Activated CD4-positive, alpha-beta memory T cell treated with anti-CD3 and anti-CD28 coated beads for 36 hours (primary cell): ENCODE measurements at regions of chr10 and their contacts with region 1.

Region 1: GRCh38 chr10:93554760-93555432 is 11.6 kb upstream of the FFAR4 start:
- DNase-seq: peak; percentile 66
- H3K4me3 Mint-ChIP-seq: no peak overlapping the region
- H3K27ac Mint-ChIP-seq: no peak overlapping the region
- H3K4me1 Mint-ChIP-seq: no peaks in the 10 kb centered on the region
- H3K27me3 Mint-ChIP-seq: peaks cover 2% of the 10 kb centered on the region

Region 2: DNA sequence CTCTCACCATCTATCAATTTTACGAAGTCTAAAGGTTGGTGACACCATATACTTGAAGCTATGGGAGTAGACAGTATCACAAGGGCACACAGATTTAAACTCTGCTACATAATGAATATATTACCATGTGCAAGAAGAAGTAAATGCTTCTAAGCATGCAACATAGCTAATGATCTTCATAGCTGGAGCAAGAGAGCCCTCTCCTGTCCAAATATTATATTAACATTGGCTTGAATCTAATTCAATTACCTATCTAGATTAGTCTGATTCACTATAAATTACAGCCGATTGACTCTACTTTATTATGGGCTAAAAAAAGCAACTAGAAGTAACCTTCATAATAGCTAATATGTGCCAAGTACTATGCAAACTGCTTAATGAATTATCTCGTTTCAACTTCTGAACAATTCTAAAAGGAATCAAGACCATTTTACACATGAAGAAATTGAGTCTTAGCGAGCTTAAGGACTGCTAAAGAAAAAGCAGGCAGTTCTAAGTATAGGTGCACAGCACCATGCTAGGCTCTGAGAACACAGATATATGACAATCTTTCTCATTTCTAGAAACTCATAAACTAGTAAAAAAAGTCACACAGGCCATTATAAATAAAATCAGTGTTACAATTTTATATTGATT is 125.6 kb after region 1 on chr10:
- CTCF ChIA-PET with region 1: interaction called, 6 read pairs
- POLR2A ChIA-PET with region 1: no interaction called
- intact Hi-C with region 1: loop called (anchors 5 kb)
- DNase-seq: no peak
- H3K4me3 Mint-ChIP-seq: no peak overlapping the region
- H3K27ac Mint-ChIP-seq: no peak overlapping the region
- H3K4me1 Mint-ChIP-seq: peaks cover 2% of the 10 kb centered on the region
- H3K27me3 Mint-ChIP-seq: no peaks in the 10 kb centered on the region

Region 3: GRCh38 chr10:93816123-93816747 is 261.3 kb after region 1 on chr10:
- CTCF ChIA-PET with region 1: interaction called, 3 read pairs
- POLR2A ChIA-PET with region 1: no interaction called
- intact Hi-C with region 1: loop called (anchors 1 kb)
- DNase-seq: peak; percentile 57
- H3K4me3 Mint-ChIP-seq: no peak overlapping the region
- H3K27ac Mint-ChIP-seq: no peak overlapping the region
- H3K4me1 Mint-ChIP-seq: no peaks in the 10 kb centered on the region
- H3K27me3 Mint-ChIP-seq: peaks cover 36% of the 10 kb centered on the region

Region 4: GRCh38 chr10:93859049-93859655 is 304.3 kb after region 1 on chr10:
- CTCF ChIA-PET with region 1: interaction called, 17 read pairs
- POLR2A ChIA-PET with region 1: no interaction called
- intact Hi-C with region 1: loop called (anchors 2 kb)
- DNase-seq: no peak
- H3K4me3 Mint-ChIP-seq: no peak overlapping the region
- H3K27ac Mint-ChIP-seq: no peak overlapping the region
- H3K4me1 Mint-ChIP-seq: no peaks in the 10 kb centered on the region
- H3K27me3 Mint-ChIP-seq: no peaks in the 10 kb centered on the region

Region 5: DNA sequence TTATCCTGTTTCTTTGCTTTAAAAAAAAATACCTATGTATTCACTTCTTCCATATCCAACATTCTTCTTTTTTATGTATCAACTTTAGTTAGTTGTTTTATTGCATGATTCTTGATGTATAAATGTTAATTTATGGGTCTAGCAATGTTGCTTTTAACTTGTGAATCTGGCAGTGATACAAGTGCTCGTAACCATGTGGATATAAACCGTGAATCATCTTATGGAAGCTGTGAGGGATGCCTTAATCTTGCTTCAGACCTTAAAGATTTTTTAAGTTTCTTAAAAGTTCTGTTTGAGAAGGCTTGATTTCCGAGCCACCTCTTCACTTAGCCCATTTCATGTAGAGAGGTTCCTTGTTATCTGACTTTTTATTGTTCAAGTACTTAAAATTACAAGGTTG is 1016.6 kb after region 1 on chr10:
- CTCF ChIA-PET with region 1: no interaction called
- POLR2A ChIA-PET with region 1: no interaction called
- intact Hi-C with region 1: no loop called
- DNase-seq: no peak
- H3K4me3 Mint-ChIP-seq: no peak overlapping the region
- H3K27ac Mint-ChIP-seq: no peak overlapping the region
- H3K4me1 Mint-ChIP-seq: no peaks in the 10 kb centered on the region
- H3K27me3 Mint-ChIP-seq: no peaks in the 10 kb centered on the region